Common myeloid progenitor, CD34-positive (primary cell): ENCODE measurements at regions of chr22 and their contacts with region 1.

Region 1: DNA sequence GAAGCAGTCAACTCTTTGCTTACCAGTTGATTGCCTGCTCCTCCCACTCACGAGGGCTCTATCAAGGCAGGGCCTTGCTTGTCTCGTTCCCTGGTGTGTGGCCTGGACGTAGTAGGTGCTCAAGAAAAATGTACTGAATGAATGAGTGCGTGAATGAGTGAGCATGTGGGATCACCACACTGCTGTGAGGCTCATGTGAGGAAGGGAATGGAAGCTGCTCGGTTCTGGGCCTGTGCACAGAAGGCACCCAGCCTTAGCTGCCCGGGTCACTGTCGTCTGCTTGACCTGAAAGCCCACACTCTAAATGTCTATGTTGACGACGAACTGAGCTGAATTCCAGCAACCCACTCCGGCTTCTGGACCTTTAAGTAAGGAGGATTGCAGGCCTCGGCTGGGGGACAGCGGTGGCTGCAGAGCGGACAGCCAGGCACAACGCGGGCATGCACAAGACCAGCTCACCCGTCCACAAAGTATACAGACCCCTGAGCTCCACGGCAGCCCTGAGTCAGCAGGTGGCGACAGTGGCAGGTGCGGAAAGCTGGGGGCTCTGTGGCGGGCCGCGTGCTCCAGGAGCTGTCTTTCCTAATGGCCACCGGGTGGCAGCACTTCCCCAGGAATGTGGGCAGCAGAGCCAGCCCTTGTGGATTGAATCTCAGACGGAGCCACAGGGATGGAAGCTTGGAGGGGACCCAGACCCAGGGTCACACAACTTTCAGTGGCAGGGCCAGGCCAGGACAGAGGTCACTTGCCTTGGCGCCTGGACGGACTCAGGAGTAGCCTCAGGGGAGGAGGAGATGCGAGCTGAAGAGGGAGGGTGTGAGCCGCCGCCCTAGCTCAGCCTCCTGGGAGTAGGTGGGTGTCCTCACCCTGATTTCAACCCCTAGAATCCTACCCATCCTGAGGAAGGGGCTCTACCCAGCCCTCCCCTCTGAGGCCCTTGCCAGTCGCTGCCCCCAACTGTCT is 5.0 kb upstream of the PICK1 start:
- DNase-seq: peak; percentile 83 to 88 (median 87)
- H3K4me3 ChIP-seq: no peak overlapping the region
- H3K27ac ChIP-seq: no peak overlapping the region
- H3K4me1 ChIP-seq: peaks cover 0 to 8% (median under 1%) of the 10 kb centered on the region in 4 experiments
- H3K27me3 ChIP-seq: no peaks in the 10 kb centered on the region

Region 2: GRCh38 chr22:38069372-38070249 is 17.4 kb after region 1 on chr22:
- CTCF ChIA-PET with region 1: interaction called, 16 read pairs
- POLR2A ChIA-PET with region 1: no interaction called
- DNase-seq: peak in 1 of 3 donors; percentile 14
- H3K4me3 ChIP-seq: no peak overlapping the region
- H3K27ac ChIP-seq: no peak overlapping the region
- H3K4me1 ChIP-seq: no peaks in the 10 kb centered on the region
- H3K27me3 ChIP-seq: no peaks in the 10 kb centered on the region

Region 3: GRCh38 chr22:38230108-38230825 is 178.1 kb after region 1 on chr22:
- CTCF ChIA-PET with region 1: interaction called, 14 read pairs
- POLR2A ChIA-PET with region 1: no interaction called
- DNase-seq: peak; percentile 77 to 88 (median 85)
- H3K4me3 ChIP-seq: no peak overlapping the region
- H3K27ac ChIP-seq: no peak overlapping the region
- H3K4me1 ChIP-seq: peaks cover 0 to 11% (median 8%) of the 10 kb centered on the region in 4 experiments
- H3K27me3 ChIP-seq: no peaks in the 10 kb centered on the region